MCF 10A (cell line): ENCODE measurements at regions of chr1 and their contacts with region 1.

Region 1: GRCh38 chr1:116485071-116485735 is 85.6 kb downstream of the CD58 start:
- DNase-seq: peak; percentile 82
- H3K4me3 Mint-ChIP-seq: no peak overlapping the region
- H3K27ac Mint-ChIP-seq: no peak overlapping the region
- H3K4me1 Mint-ChIP-seq: peaks cover 28% of the 10 kb centered on the region
- H3K27me3 Mint-ChIP-seq: no peaks in the 10 kb centered on the region
- CTCF ChIP-seq: peak; percentile 90

Region 2: GRCh38 chr1:116139592-116140134 is 345.5 kb before region 1 on chr1:
- CTCF ChIA-PET with region 1: interaction called, 323 read pairs
- POLR2A ChIA-PET with region 1: interaction called, 33 read pairs
- intact Hi-C with region 1: loop called (anchors 1 kb)
- DNase-seq: no peak
- H3K4me3 Mint-ChIP-seq: no peak overlapping the region
- H3K27ac Mint-ChIP-seq: no peak overlapping the region
- H3K4me1 Mint-ChIP-seq: no peaks in the 10 kb centered on the region
- H3K27me3 Mint-ChIP-seq: no peaks in the 10 kb centered on the region
- CTCF ChIP-seq: no peak

Region 3: DNA sequence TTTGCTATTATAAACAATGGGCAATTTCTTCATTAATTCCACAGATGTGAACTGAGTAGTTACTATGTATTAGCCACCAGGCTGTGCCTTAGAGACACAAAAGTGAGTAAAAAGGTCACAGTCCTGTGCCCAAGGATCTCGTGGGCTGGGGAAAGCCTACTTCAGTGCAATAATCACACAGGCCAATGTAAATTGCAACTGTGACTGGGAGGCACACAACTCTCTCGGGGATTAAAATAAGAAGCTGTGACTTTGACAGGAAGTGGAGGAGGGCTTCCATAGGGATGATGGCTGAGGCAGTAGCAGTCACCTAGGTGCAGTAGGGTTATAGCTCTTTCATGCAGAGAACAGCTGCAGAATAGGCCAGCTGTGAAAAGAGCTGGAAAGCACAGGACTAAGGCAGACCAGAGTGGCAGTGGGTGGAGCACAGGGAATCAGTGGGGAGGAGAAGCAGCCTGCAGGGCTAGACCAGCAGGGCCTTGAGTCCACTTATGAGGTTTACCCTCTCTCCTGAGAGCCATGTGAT is 252.2 kb before region 1 on chr1:
- CTCF ChIA-PET with region 1: interaction called, 4 read pairs
- POLR2A ChIA-PET with region 1: no interaction called
- intact Hi-C with region 1: loop called (anchors 5 kb)
- DNase-seq: peak; percentile 36
- H3K4me3 Mint-ChIP-seq: no peak overlapping the region
- H3K27ac Mint-ChIP-seq: no peak overlapping the region
- H3K4me1 Mint-ChIP-seq: no peaks in the 10 kb centered on the region
- H3K27me3 Mint-ChIP-seq: no peaks in the 10 kb centered on the region
- CTCF ChIP-seq: no peak

Region 4: GRCh38 chr1:116377541-116378529 is 107.4 kb before region 1 on chr1:
- CTCF ChIA-PET with region 1: interaction called, 26 read pairs
- POLR2A ChIA-PET with region 1: interaction called, 10 read pairs
- intact Hi-C with region 1: loop called (anchors 5 kb)
- DNase-seq: peak; percentile 93
- H3K4me3 Mint-ChIP-seq: peak overlapping the region; percentile 94
- H3K27ac Mint-ChIP-seq: peak overlapping the region; percentile 78
- H3K4me1 Mint-ChIP-seq: peaks cover 55% of the 10 kb centered on the region
- H3K27me3 Mint-ChIP-seq: no peaks in the 10 kb centered on the region
- CTCF ChIP-seq: no peak

Region 5: GRCh38 chr1:116448813-116449281 is 36.4 kb before region 1 on chr1:
- CTCF ChIA-PET with region 1: interaction called, 13 read pairs
- POLR2A ChIA-PET with region 1: no interaction called
- intact Hi-C with region 1: no loop called
- DNase-seq: peak; percentile 42
- H3K4me3 Mint-ChIP-seq: no peak overlapping the region
- H3K27ac Mint-ChIP-seq: no peak overlapping the region
- H3K4me1 Mint-ChIP-seq: peaks cover 6% of the 10 kb centered on the region
- H3K27me3 Mint-ChIP-seq: peaks cover 5% of the 10 kb centered on the region
- CTCF ChIP-seq: no peak

Region 6: GRCh38 chr1:116504308-116505156 is 19.3 kb after region 1 on chr1:
- CTCF ChIA-PET with region 1: interaction called, 110 read pairs
- POLR2A ChIA-PET with region 1: interaction called, 4 read pairs
- intact Hi-C with region 1: no loop called
- DNase-seq: peak; percentile 62
- H3K4me3 Mint-ChIP-seq: no peak overlapping the region
- H3K27ac Mint-ChIP-seq: peak overlapping the region; percentile 73
- H3K4me1 Mint-ChIP-seq: peaks cover 27% of the 10 kb centered on the region
- H3K27me3 Mint-ChIP-seq: no peaks in the 10 kb centered on the region
- CTCF ChIP-seq: no peak